ENCODE measurements at regions of chr2 and their contacts with region 1.

Region 1: DNA sequence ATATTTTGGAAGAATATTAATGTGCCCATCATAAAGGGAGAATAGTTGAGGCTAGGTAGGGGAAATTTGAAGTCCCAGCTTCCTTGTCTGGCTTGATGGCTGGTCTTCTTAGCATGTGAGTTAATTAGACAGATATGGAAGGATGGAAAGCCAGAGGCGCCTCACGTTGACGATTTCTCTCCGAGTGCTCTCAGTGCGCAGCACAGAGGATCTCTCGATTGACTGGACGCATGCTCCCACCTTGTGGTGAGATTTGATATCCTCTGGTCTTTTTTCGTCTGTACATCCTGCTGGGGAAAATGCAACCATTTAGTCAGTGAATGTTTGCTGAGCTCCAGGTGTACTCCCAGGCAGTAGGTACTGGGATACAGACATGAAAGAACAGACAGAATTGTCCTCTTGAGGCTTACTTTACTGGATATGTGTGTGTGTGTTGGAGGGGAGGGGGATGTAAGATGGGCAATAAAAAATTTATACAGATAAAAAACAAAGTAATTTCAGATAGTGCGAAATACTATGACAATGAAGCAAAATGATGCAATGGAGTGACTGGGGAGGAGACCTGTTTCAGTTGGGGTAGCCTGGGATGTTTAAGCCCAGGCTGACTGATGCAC is 66.9 kb upstream of the ZNG1B start:
- DNase-seq: peak; percentile 86
- ATAC-seq: peak; percentile 99
- H3K4me3 Mint-ChIP-seq: no peak overlapping the region
- H3K27ac Mint-ChIP-seq: peak overlapping the region; percentile 66
- H3K4me1 Mint-ChIP-seq: peaks cover 21% of the 10 kb centered on the region
- H3K27me3 Mint-ChIP-seq: peaks cover 10% of the 10 kb centered on the region

Region 2: GRCh38 chr2:113198790-113199612 is 171.6 kb before region 1 on chr2:
- CTCF ChIA-PET with region 1: interaction called, 28 read pairs
- DNase-seq: peak; percentile 85
- ATAC-seq: peak; percentile 81
- H3K4me3 Mint-ChIP-seq: no peak overlapping the region
- H3K27ac Mint-ChIP-seq: peak overlapping the region; percentile 47
- H3K4me1 Mint-ChIP-seq: peaks cover 53% of the 10 kb centered on the region
- H3K27me3 Mint-ChIP-seq: no peaks in the 10 kb centered on the region

Region 3: GRCh38 chr2:113357071-113357470 is 13.5 kb before region 1 on chr2:
- CTCF ChIA-PET with region 1: interaction called, 11 read pairs
- DNase-seq: peak; percentile 51
- ATAC-seq: peak; percentile 40
- H3K4me3 Mint-ChIP-seq: no peak overlapping the region
- H3K27ac Mint-ChIP-seq: no peak overlapping the region
- H3K4me1 Mint-ChIP-seq: peaks cover 47% of the 10 kb centered on the region
- H3K27me3 Mint-ChIP-seq: peaks cover 28% of the 10 kb centered on the region

Region 4: DNA sequence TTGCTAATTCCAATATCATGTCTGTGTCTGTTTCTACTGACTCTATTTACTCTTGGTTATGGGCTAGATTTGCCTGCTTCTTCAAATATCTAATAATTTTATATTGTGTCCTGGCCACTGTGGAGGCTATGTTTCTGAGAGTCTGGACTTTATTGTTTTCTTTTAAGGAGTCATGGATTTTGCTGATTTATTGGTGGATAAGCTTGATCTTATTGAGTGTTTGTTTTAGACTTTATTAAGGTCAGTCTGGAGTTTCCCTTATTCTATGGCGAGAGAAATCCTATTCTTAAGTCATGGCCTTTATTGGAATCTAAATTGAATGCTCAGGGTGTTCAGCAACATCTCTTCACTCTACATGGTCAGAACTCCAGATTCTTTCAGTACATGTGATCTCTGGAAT is 11.9 kb after region 1 on chr2:
- CTCF ChIA-PET with region 1: no interaction called
- DNase-seq: no peak
- ATAC-seq: no peak
- H3K4me3 Mint-ChIP-seq: no peak overlapping the region
- H3K27ac Mint-ChIP-seq: no peak overlapping the region
- H3K4me1 Mint-ChIP-seq: no peaks in the 10 kb centered on the region
- H3K27me3 Mint-ChIP-seq: peaks cover 48% of the 10 kb centered on the region

Region 5: DNA sequence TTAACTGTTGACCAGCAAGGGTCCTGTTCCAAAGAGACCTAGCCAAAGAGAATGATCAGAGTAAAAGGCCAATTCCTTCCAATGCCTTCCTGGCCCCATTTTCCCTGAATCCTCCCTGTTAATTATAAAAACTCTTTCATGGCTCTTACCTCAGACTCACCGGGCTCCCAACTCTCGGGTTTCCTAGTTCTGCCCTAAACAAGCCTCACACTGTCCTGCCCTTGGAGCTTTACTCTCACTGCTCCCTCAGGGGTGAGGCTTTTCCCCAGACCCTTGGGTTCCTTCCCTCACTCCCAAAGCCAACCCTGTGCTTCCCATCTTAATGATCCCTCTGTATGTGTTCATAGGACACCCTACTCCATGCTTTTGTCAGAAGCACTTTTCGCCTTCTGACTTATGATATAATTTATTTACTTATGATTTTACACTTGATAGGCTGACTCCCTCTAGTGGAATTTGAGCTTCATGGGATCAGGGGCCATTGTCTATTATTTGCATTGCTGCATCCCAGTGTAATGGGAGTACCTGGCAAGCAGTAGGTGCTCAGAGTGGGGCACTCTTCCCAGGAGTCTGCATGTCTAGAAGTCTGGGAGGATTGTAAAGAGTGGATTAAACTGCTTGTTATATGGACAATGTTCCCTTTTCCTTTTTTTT is 37.0 kb after region 1 on chr2:
- CTCF ChIA-PET with region 1: no interaction called
- DNase-seq: no peak
- ATAC-seq: no peak
- H3K4me3 Mint-ChIP-seq: no peak overlapping the region
- H3K27ac Mint-ChIP-seq: no peak overlapping the region
- H3K4me1 Mint-ChIP-seq: no peaks in the 10 kb centered on the region
- H3K27me3 Mint-ChIP-seq: peaks cover 46% of the 10 kb centered on the region

Region 6: GRCh38 chr2:113831161-113831560 is 460.6 kb after region 1 on chr2:
- CTCF ChIA-PET with region 1: no interaction called
- DNase-seq: no peak
- ATAC-seq: no peak
- H3K4me3 Mint-ChIP-seq: no peak overlapping the region
- H3K27ac Mint-ChIP-seq: no peak overlapping the region
- H3K4me1 Mint-ChIP-seq: no peaks in the 10 kb centered on the region
- H3K27me3 Mint-ChIP-seq: no peaks in the 10 kb centered on the region